ENCODE measurements at regions of chr19 and their contacts with region 1.

Region 1: GRCh38 chr19:41641879-41642485 is 15.1 kb upstream of the CEACAM4 start:
- DNase-seq: peak; percentile 79
- ATAC-seq: peak; percentile 89
- H3K4me3 Mint-ChIP-seq: no peak overlapping the region
- H3K27ac Mint-ChIP-seq: no peak overlapping the region
- H3K4me1 Mint-ChIP-seq: no peaks in the 10 kb centered on the region
- H3K27me3 Mint-ChIP-seq: peaks cover 13% of the 10 kb centered on the region

Region 2: GRCh38 chr19:41554907-41555306 is 87.1 kb before region 1 on chr19:
- CTCF ChIA-PET with region 1: no interaction called
- POLR2A ChIA-PET with region 1: no interaction called
- DNase-seq: peak; percentile 57
- ATAC-seq: peak; percentile 69
- H3K4me3 Mint-ChIP-seq: peak overlapping the region; percentile 86
- H3K27ac Mint-ChIP-seq: peak overlapping the region; percentile 74
- H3K4me1 Mint-ChIP-seq: peaks cover 49% of the 10 kb centered on the region
- H3K27me3 Mint-ChIP-seq: peaks cover 6% of the 10 kb centered on the region

Region 3: GRCh38 chr19:41657157-41657556 is 15.2 kb after region 1 on chr19:
- CTCF ChIA-PET with region 1: interaction called, 20 read pairs
- POLR2A ChIA-PET with region 1: no interaction called
- DNase-seq: no peak
- ATAC-seq: no peak
- H3K4me3 Mint-ChIP-seq: no peak overlapping the region
- H3K27ac Mint-ChIP-seq: no peak overlapping the region
- H3K4me1 Mint-ChIP-seq: no peaks in the 10 kb centered on the region
- H3K27me3 Mint-ChIP-seq: peaks cover 56% of the 10 kb centered on the region

Region 4: DNA sequence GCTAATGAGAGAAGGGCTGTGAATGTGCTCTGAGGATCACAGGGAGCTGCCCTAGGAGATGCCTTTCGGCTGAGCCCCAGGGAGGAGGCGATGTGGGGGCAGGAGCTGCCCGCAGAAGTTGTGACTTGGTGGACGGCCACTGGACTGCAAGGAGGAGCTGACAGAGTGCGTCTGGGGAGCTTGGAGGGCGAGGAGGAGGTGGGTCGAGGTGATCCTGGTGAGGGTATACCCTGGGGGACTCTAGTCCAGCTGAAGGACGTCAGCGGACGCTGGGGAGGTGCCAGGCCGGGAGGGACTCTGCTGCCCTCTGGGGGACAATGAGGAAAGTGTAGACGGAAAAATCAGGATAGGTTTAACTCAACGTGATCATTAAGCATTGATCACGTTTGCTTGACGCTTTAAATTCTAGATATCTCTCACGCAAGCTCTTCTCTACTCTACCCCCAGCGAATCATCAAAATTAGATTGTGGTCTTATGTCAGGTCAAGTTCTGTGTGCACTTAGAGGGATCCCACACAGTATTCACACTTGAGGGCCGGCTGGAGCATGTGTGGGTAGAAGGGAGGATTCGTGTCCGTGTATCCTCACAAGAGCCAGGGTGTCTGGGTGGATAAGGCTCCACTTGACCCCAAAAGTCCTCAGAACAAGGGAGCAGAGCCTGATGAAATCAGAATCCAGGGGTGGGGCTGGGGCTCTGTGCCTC is 49.4 kb after region 1 on chr19:
- CTCF ChIA-PET with region 1: interaction called, 30 read pairs
- POLR2A ChIA-PET with region 1: no interaction called
- DNase-seq: peak; percentile 41
- ATAC-seq: peak; percentile 27
- H3K4me3 Mint-ChIP-seq: no peak overlapping the region
- H3K27ac Mint-ChIP-seq: no peak overlapping the region
- H3K4me1 Mint-ChIP-seq: no peaks in the 10 kb centered on the region
- H3K27me3 Mint-ChIP-seq: peaks cover 9% of the 10 kb centered on the region

Region 5: GRCh38 chr19:41701401-41702075 is 59.6 kb after region 1 on chr19:
- CTCF ChIA-PET with region 1: interaction called, 10 read pairs
- POLR2A ChIA-PET with region 1: no interaction called
- DNase-seq: no peak
- ATAC-seq: no peak
- H3K4me3 Mint-ChIP-seq: no peak overlapping the region
- H3K27ac Mint-ChIP-seq: no peak overlapping the region
- H3K4me1 Mint-ChIP-seq: no peaks in the 10 kb centered on the region
- H3K27me3 Mint-ChIP-seq: peaks cover 15% of the 10 kb centered on the region